ENCODE measurements at regions of chr9 and their contacts with region 1.

Region 1: GRCh38 chr9:22452415-22453010 is 5.9 kb downstream of the DMRTA1 start:
- DNase-seq: no peak
- H3K4me3 ChIP-seq: no peak overlapping the region
- H3K27ac ChIP-seq: no peak overlapping the region
- H3K4me1 ChIP-seq: peaks cover 0 to 43% (median 4%) of the 10 kb centered on the region in 3 donors
- H3K27me3 ChIP-seq: peaks cover 0 to 3% (median 0%) of the 10 kb centered on the region in 4 donors
- CTCF ChIP-seq: peak; percentile 68 to 87 (median 78)
- POLR2A ChIP-seq: no peak

Region 2: GRCh38 chr9:22244141-22245011 is 208.1 kb before region 1 on chr9:
- intact Hi-C with region 1: loop called (anchors 5 kb)
- DNase-seq: no peak
- H3K4me3 ChIP-seq: no peak overlapping the region
- H3K27ac ChIP-seq: no peak overlapping the region
- H3K4me1 ChIP-seq: peaks cover 0 to 21% (median 0%) of the 10 kb centered on the region in 3 donors
- H3K27me3 ChIP-seq: no peaks in the 10 kb centered on the region
- CTCF ChIP-seq: peak in 5 of 6 experiments; percentile 21 to 57 (median 37)
- POLR2A ChIP-seq: no peak

Region 3: GRCh38 chr9:22307013-22307711 is 145.4 kb before region 1 on chr9:
- intact Hi-C with region 1: loop called (anchors 5 kb)
- DNase-seq: no peak
- H3K4me3 ChIP-seq: no peak overlapping the region
- H3K27ac ChIP-seq: no peak overlapping the region
- H3K4me1 ChIP-seq: no peaks in the 10 kb centered on the region
- H3K27me3 ChIP-seq: no peaks in the 10 kb centered on the region
- CTCF ChIP-seq: peak in 5 of 6 experiments; percentile 38 to 72 (median 44)
- POLR2A ChIP-seq: no peak

Measured in esophagus squamous epithelium (tissue), 5 donors.